ENCODE measurements at regions of chr12 and their contacts with region 1.

Region 1: DNA sequence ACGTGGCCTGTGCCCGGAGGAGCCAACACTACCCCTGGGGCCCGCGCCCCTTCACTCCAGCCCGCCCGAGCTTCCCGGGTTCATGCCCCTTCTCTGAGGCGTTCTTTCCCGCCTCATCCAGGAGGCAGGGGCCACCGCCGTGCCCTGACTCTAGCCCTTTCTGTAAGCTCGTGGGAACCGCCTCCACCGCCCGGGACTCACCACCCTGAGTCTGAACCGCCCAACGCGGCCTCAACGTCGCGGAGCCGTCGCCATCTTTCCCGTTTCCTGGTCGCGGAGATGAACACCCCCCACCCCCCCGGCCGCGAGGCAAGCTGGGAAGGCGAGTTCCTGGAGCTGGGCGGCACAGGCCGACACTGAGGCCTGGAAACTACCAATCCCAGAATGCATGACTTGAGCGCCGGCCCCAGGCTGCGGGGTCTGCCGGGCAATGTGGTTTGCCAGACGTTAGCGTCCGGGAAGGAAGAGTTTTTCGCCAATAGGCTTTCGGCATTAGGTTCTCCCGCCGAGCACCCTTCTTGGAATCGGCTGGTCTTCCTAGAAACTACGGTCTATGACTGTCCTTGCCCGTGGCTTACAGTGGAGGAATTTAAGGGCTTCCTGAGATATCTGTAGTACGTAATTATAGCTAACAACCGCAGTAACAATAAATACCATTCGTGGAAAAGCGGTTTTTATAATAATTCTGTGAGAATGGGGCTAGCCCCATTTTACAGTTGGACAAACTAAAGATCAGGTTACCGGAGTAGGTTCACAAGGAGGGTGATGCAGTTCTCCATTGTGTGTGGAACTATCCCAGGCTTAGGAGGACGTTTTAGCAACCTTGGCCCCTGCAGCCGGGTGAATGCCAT is at the start of gene DDX23:
- DNase-seq: peak; percentile 95 to 97
- ATAC-seq: peak; percentile 97 to 99 (median 98)
- H3K4me3 ChIP-seq: peak within 1 kb of the TSS; percentile 100
- H3K27ac ChIP-seq: peak within 1 kb of the TSS; percentile 91
- H3K4me1 ChIP-seq: peaks cover 19% of the 10 kb centered on the region
- H3K27me3 ChIP-seq: no peaks in the 10 kb centered on the region
- CTCF ChIP-seq: no peak
- total RNA-seq, gene DDX23: 38.5 to 71.6 (median 58.5) TPM

Region 2: DNA sequence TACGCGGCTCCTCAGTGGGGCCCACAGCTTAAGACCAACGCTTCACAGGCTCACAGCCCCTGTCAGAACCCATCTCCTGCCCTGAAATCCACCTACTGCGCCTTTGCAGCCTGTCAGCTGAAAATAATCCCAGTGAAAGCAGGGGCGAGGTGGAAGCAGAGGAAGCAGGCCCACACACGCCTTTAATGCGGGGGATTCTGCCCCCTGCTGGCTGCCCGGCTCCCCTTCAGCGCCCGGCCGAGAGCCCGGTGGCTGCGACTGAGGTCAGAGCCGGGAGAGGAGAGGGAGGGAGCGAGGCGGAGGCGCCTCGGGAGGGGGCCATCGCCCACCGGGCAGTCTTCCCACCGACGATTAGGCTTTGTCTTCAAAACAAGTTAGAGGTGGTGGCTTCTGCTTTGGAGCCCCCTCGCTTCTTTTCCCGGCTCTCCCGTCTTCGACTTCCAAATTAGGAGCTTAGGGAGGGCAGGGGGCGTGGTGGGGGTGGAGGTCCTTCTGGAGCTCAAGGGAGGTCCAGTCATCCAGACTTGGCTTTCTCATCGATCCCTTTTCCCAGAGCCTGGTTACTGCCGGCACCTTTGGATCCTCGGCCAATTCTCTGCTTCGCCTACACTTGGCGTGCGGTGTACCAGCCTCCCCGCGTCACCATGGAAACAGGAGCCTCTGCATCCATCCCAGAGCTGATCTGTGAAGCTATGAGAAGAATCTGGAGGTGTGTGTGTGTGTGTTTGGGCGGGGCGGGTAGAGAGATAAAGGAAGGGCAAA is 38.7 kb after region 1 on chr12:
- intact Hi-C with region 1: loop called (anchors 1 kb)
- DNase-seq: peak; percentile 75 to 86
- ATAC-seq: peak; percentile 90 to 100 (median 97)
- H3K4me3 ChIP-seq: peak overlapping the region; percentile 43
- H3K27ac ChIP-seq: no peak overlapping the region
- H3K4me1 ChIP-seq: no peaks in the 10 kb centered on the region
- H3K27me3 ChIP-seq: peaks cover 0 to 22% (median 4%) of the 10 kb centered on the region in 3 donors
- CTCF ChIP-seq: peak; percentile 86

Region 3: DNA sequence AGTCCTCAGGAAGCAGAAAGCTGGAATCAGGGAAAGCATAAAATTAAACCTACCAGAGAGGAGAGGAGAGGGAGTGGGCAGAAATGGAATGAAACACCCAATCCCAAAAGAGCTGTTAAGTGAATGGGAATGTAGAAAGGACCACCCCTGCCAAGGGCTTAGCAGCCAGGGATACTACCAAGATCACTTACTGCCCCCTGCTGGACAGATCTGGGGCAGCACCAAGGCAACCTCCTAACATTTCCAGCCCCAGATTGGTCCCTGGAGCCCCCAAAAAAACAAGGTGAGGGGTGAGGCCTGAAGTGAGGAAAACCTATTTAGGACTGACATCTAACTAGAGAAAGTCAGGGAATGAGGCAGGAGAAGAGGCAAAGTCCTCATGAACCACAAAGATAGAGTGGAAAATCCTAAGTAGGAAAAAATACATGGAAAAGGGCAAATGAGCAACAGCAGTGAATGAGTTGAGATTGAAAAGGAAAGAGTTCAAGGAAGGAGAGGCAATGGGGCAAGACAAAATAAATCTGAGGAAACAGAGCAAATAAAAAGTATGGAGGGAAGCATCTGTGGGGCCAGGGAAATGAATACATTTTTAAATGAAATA is 84.4 kb after region 1 on chr12:
- intact Hi-C with region 1: loop called (anchors 1 to 5 kb)
- DNase-seq: peak; percentile 74 to 83
- ATAC-seq: peak; percentile 57 to 87 (median 78)
- H3K4me3 ChIP-seq: no peak overlapping the region
- H3K27ac ChIP-seq: no peak overlapping the region
- H3K4me1 ChIP-seq: no peaks in the 10 kb centered on the region
- H3K27me3 ChIP-seq: no peaks in the 10 kb centered on the region
- CTCF ChIP-seq: peak; percentile 86

Measured in psoas muscle (tissue), 8 donors.